Activated CD4-positive, alpha-beta T cell treated with anti-CD3 and anti-CD28 coated beads, Interleukin-2, amount 10 ng/mL, durations not matched to agents 24 days and 14 days (primary cell): ENCODE measurements at regions of chr2 and their contacts with region 1.

Region 1: GRCh38 chr2:39948016-39948719 is 169.1 kb upstream of the THUMPD2 start:
- DNase-seq: no peak
- H3K4me3 Mint-ChIP-seq: peak overlapping the region; percentile 32
- H3K27ac Mint-ChIP-seq: peak overlapping the region; percentile 92
- H3K4me1 Mint-ChIP-seq: peaks cover 35% of the 10 kb centered on the region
- H3K27me3 Mint-ChIP-seq: no peaks in the 10 kb centered on the region

Region 2: DNA sequence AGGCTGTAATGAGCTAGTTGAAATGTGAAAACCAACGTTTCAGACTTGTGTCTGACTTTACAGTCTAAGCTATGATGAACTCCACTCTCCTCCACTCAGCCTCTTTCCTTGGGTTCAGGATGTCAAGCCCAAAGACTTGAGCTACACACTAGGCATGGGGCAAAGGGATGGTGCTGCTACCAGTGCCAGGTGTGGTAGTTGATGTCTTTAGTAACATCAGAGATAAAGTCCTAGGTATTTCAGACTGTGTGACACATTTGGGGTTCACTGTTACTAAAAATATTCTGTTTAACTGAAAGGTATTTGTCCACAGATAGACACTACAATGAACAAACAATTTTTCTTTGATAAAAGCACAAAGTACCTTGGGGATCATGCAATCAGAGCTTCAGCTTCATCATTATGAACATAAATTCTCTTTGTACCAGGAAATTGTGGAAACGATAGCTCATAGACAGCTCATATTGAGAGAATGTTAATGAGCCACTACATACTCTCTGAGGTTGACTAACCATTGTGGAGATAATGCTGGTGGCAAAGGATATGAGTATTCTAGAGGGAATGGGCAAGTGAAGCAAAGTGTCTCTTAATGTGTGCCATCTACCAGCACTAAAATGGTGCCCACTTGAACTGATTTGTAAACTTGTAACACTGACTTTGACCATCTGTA is 84.6 kb after region 1 on chr2:
- intact Hi-C with region 1: loop called (anchors 1 kb)
- DNase-seq: no peak
- H3K4me3 Mint-ChIP-seq: no peak overlapping the region
- H3K27ac Mint-ChIP-seq: peak overlapping the region; percentile 64
- H3K4me1 Mint-ChIP-seq: peaks cover 17% of the 10 kb centered on the region
- H3K27me3 Mint-ChIP-seq: no peaks in the 10 kb centered on the region

Region 3: GRCh38 chr2:40210344-40210967 is 262.3 kb after region 1 on chr2:
- intact Hi-C with region 1: loop called (anchors 2 kb)
- DNase-seq: no peak
- H3K4me3 Mint-ChIP-seq: no peak overlapping the region
- H3K27ac Mint-ChIP-seq: peak overlapping the region; percentile 48
- H3K4me1 Mint-ChIP-seq: peaks cover 20% of the 10 kb centered on the region
- H3K27me3 Mint-ChIP-seq: no peaks in the 10 kb centered on the region

Region 4: DNA sequence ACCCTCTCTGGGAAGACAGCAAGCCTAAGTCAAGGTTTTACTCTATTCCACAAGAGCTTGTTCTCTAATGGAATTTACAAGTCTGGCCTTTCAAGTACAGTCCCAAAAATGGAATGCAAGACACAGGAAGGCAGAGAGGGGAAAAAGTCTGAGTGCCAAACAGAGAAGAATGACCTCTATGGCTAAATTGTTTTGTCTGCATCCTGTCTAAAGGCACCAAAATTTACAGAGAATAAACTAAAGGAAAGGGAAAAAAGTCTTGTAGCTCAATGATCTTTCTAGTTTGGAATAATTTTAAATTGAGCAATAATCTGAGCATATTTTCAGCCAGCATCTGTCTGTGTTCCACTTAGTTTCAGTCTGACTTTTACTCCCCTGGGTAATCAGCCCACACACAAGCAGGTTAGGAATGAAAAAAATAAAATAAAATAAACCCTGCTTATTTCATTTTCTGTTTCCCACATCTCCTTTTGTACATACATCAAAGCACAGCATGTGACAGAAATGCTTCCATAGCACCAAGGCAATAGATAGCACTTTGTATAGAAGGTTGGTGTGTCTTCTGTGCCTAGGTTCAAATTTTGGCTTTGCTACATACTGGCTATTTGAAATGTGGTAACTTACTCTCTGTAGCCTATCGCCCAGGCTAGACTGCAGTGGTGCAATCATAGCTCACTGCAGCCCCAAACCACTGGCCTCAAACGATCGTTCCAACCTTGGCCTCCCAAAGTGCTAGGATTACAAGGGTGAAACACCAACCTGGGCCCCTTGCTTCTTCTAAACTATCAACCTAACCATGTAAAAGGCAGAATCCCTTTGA is 398.6 kb after region 1 on chr2:
- intact Hi-C with region 1: no loop called
- DNase-seq: no peak
- H3K4me3 Mint-ChIP-seq: no peak overlapping the region
- H3K27ac Mint-ChIP-seq: no peak overlapping the region
- H3K4me1 Mint-ChIP-seq: no peaks in the 10 kb centered on the region
- H3K27me3 Mint-ChIP-seq: no peaks in the 10 kb centered on the region